HAP-1 (cell line): ENCODE measurements at regions of chr2 and their contacts with region 1.

Region 1: DNA sequence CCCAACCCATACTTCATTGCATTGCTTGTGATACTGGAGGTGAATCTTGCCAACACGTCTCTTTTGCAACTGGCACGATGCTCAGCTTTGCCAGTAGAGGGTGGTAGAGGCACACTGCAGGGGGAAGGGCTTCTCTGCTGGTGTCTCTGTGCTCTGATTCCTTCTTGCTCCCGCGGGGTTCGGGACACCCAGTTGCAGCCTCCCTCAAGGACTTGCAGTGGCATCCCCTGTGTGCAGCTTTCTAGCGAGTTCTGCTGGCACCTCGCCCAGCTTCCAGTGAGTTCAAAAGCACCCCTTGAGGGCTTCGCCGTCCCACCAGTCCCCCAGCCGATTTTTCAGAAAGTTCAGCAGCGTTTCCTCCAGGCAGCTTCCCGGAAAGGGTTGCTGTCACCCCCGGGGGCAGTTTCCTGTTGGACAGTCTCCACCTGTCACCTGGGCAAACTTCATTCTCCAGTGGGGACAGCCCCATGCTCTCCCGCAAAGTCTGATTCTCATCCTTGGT is 35.3 kb upstream of the EN1 start:
- DNase-seq: peak; percentile 59 to 76
- H3K4me3 ChIP-seq: peak overlapping the region; percentile 15; the same call in 1 of the 2 replicates
- H3K4me1 ChIP-seq: no peaks in the 10 kb centered on the region
- H3K27me3 ChIP-seq: 0 out of 2 replicates have a peak, but pooled peaks cover 3% of the 10 kb centered on the region

Region 2: DNA sequence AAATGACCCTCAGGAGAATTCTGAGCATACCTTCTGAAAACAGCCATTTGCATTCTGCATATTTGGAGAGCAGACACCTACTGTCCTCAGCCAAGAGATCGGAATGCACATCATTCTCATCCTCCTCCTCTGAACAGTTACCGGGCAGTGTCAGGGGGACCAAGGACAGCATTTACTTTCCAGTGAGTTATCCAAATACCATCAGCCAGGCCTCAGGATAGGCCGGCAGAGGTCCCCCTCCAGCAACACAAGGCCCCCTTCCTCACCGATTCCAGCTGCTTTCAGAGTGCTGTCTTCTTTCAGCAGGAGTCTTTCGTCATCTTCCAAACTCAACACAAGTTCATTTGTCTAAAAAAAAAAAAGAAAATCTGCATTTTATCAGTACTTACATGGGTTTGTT is 428.6 kb after region 1 on chr2:
- in situ Hi-C with region 1: loop called (anchors 5 kb)
- DNase-seq: no peak
- H3K4me3 ChIP-seq: no peak overlapping the region
- H3K4me1 ChIP-seq: no peaks in the 10 kb centered on the region
- H3K27me3 ChIP-seq: no peaks in the 10 kb centered on the region